MCF 10A (cell line): ENCODE measurements at regions of chr5 and their contacts with region 1.

Region 1: DNA sequence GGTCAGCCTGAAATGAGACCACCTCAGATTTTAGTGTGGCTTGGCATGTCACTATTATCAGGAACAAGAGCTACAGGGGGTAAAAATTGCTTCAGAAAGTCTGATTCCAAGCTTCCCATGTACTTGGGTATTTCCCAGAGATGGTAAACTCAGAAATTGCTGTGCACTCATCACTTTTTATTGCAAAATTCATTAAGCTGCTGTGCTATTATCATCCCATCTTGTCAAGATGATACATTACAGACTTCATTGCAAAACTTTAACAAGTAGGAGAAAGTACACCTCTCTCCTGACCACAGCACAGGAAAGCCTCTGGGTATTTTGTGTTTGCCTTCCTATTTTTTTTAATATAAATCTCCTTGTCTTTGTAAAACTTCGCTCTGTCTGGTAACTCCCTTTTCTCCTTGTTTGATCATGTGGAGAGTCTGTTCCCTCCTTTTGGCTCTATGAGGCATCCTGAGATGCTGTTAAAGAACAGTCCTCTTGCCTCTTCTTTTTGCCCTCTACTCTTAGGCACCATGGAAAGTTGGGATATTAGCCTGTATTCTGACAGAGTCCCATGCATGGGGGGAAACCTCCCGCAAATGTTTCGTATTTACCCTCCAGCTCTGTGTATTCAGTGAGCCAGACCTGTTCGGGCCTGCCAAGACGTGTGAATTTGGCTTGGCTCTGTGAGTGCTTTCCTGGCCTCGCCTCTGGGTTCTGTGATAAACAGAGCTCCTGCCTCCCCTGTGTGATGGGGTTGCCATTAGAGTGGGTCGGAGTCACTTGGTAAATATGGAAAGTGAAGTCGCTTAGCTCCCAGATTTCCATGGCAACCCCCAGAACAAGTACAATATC is 260.7 kb downstream of the NR3C1 start:
- DNase-seq: peak; percentile 97
- H3K4me3 Mint-ChIP-seq: peak overlapping the region; percentile 33
- H3K27ac Mint-ChIP-seq: peak overlapping the region; percentile 91
- H3K4me1 Mint-ChIP-seq: peaks cover 54% of the 10 kb centered on the region
- H3K27me3 Mint-ChIP-seq: no peaks in the 10 kb centered on the region
- CTCF ChIP-seq: no peak

Region 2: DNA sequence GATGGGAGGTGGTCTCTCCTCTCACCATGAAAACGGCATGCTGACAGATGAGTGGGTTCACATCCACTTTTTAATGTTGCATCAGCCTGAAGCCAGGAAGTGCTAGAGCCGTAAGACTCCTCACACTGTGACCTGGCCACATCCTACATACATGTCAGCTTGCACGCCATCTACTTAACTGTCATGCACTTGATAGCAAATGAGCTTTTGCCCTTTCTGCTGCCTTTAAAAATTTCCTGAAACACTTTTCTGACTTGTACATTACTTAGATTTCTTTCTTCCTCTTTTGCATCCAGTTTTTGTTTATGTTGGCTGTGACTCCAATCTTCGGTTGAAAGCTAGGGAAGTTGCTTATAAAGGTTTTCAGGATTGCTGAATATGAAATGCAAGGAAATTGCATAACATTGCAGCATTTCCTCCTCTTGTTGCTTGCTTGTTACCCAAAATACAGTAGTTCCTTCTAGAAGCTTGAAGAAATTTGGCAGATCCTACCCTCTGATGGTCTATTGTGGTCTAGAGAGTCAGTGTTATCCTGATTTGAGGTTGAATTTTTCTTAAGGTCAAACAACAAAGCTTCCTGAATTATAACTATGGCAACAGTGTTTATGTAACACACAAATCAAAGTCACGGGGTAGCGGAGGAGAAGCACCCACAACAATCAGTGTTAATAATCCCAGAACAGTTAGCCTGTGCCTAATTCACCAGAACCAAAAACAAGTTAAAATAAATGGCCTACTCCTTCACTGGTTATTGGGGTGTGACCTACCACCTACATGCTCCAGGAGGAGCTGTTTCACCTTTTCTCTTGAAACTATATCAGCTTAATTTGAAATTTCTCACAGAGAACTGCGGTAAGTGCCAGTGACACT is 140.1 kb before region 1 on chr5:
- CTCF ChIA-PET with region 1: interaction called, 3 read pairs
- POLR2A ChIA-PET with region 1: interaction called, 16 read pairs
- intact Hi-C with region 1: no loop called
- DNase-seq: peak; percentile 96
- H3K4me3 Mint-ChIP-seq: no peak overlapping the region
- H3K27ac Mint-ChIP-seq: peak overlapping the region; percentile 92
- H3K4me1 Mint-ChIP-seq: peaks cover 29% of the 10 kb centered on the region
- H3K27me3 Mint-ChIP-seq: no peaks in the 10 kb centered on the region
- CTCF ChIP-seq: peak; percentile 72

Region 3: GRCh38 chr5:143086908-143087637 is 55.7 kb before region 1 on chr5:
- CTCF ChIA-PET with region 1: interaction called, 3 read pairs
- POLR2A ChIA-PET with region 1: interaction called, 18 read pairs
- intact Hi-C with region 1: no loop called
- DNase-seq: peak; percentile 67
- H3K4me3 Mint-ChIP-seq: no peak overlapping the region
- H3K27ac Mint-ChIP-seq: peak overlapping the region; percentile 32
- H3K4me1 Mint-ChIP-seq: peaks cover 14% of the 10 kb centered on the region
- H3K27me3 Mint-ChIP-seq: no peaks in the 10 kb centered on the region
- CTCF ChIP-seq: no peak

Region 4: DNA sequence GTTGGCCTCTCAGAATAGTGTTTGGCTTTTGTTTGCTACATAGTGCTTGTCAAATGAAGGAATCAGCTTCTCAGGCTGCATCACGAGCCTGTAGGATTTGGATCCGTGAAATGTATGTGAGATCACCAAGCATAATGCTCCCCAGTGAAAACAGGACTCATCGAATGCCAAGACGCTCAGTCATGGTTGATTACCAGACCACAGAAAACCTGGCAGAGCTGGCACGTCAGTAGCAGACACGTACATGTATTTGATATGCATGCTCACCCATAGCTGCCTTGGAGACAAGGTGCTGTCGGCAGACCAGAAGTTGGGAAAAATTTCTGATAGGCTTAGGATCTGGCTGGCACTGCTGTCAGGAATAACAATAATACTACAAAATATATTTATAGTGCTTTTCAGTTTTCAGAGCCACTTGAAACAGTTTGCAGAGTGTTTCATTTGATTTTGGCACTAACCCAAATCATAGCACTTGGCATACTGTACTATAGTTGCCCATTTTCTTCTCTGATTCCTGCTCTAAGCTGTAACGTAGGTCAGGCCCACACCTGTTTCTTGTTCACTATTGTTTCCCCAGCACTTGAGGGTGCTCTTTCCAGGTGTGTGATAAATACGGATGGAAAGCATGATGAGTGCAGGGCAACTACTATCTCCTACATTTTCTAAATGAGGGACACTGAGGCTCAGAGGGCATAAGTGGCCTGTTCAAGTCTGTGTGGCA is 34.6 kb after region 1 on chr5:
- CTCF ChIA-PET with region 1: no interaction called
- POLR2A ChIA-PET with region 1: interaction called, 28 read pairs
- intact Hi-C with region 1: loop called (anchors 1 kb)
- DNase-seq: peak; percentile 99
- H3K4me3 Mint-ChIP-seq: no peak overlapping the region
- H3K27ac Mint-ChIP-seq: peak overlapping the region; percentile 86
- H3K4me1 Mint-ChIP-seq: peaks cover 16% of the 10 kb centered on the region
- H3K27me3 Mint-ChIP-seq: no peaks in the 10 kb centered on the region
- CTCF ChIP-seq: no peak

Region 5: DNA sequence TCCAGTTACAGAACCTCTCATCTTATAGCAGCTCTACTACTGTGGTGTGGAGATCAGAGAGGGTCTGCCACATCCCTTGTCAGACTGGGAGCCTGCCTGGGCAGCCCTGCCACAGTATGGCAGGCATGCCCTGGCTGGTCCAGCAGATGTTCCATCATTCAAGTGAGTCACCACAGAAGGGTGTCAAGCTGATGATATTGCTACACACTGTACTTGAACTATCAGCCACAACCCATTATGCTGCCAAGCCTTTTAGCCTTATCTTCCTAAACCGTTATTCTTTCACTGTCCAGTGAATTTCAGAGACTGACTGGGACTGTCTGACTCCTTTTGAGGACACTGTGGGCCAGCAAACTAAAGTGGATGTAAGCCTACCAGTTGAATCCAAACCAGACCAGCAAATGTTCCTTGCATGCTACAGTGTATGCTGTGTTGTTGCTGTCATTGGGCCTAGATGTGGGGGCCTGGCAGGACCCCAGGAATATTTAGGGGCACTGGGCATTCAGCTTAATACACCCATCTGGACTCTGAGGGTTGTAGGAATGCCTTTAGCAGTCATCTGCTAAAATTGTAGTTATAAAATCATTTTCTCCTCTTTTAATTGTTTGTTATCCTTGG is 58.1 kb after region 1 on chr5:
- CTCF ChIA-PET with region 1: interaction called, 3 read pairs
- POLR2A ChIA-PET with region 1: interaction called, 44 read pairs
- intact Hi-C with region 1: loop called (anchors 5 kb)
- DNase-seq: peak; percentile 97
- H3K4me3 Mint-ChIP-seq: peak overlapping the region; percentile 15
- H3K27ac Mint-ChIP-seq: peak overlapping the region; percentile 84
- H3K4me1 Mint-ChIP-seq: peaks cover 45% of the 10 kb centered on the region
- H3K27me3 Mint-ChIP-seq: no peaks in the 10 kb centered on the region
- CTCF ChIP-seq: no peak

Region 6: DNA sequence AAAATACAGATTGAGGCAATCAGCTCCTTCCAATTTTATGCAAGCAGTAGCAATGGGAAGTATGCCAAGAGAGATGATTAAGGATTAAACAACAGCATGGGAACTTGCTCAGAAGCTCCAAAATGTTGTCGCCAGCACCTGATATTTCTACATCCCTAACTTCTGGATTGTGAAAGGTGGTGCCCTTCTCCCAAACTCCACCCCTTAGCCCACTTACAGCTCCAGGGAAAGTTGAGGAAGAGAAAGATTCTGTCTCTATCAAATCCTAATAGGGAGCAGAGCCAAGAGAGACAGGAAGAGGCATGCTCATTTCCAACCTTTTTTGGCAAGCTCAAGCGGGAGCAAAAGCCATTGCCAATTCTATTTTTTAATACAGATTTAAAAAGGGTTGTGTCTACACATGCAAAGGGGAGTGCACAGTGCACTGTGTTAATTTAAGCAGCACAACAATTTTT is 353.0 kb after region 1 on chr5:
- CTCF ChIA-PET with region 1: interaction called, 4 read pairs
- POLR2A ChIA-PET with region 1: interaction called, 6 read pairs
- intact Hi-C with region 1: loop called (anchors 10 kb)
- DNase-seq: peak; percentile 100
- H3K4me3 Mint-ChIP-seq: peak overlapping the region; percentile 45
- H3K27ac Mint-ChIP-seq: peak overlapping the region; percentile 82
- H3K4me1 Mint-ChIP-seq: peaks cover 46% of the 10 kb centered on the region
- H3K27me3 Mint-ChIP-seq: no peaks in the 10 kb centered on the region
- CTCF ChIP-seq: no peak